ENCODE measurements at regions of chr10 and their contacts with region 1.

Region 1: GRCh38 chr10:29443745-29444523 is 155.1 kb downstream of the LYZL1 start:
- DNase-seq: no peak
- H3K4me3 ChIP-seq: no peak overlapping the region
- H3K27ac ChIP-seq: no peak overlapping the region
- H3K4me1 ChIP-seq: no peaks in the 10 kb centered on the region
- H3K27me3 ChIP-seq: no peaks in the 10 kb centered on the region
- CTCF ChIP-seq: no peak

Region 2: DNA sequence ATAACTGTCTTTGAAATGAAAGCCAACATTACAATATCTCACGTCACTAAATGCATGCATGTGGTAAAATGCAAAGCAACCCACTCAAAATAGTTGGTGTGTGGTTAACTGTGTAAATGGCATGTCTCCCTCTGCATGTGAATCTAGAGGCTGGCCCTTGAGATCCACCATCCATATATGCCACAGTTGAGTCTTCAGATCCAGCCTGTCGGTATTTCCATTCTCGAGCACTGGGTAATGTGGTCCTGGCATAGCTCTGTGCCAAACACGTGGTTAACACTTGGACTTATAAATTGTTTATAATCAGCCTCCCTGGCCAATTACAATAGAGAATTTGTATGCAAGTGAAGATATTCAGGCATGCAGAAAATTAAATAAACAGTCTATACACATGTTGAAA is 64.7 kb before region 1 on chr10:
- intact Hi-C with region 1: loop called (anchors 2 kb)
- DNase-seq: no peak
- H3K4me3 ChIP-seq: no peak overlapping the region
- H3K27ac ChIP-seq: no peak overlapping the region
- H3K4me1 ChIP-seq: no peaks in the 10 kb centered on the region
- H3K27me3 ChIP-seq: no peaks in the 10 kb centered on the region
- CTCF ChIP-seq: no peak

Region 3: DNA sequence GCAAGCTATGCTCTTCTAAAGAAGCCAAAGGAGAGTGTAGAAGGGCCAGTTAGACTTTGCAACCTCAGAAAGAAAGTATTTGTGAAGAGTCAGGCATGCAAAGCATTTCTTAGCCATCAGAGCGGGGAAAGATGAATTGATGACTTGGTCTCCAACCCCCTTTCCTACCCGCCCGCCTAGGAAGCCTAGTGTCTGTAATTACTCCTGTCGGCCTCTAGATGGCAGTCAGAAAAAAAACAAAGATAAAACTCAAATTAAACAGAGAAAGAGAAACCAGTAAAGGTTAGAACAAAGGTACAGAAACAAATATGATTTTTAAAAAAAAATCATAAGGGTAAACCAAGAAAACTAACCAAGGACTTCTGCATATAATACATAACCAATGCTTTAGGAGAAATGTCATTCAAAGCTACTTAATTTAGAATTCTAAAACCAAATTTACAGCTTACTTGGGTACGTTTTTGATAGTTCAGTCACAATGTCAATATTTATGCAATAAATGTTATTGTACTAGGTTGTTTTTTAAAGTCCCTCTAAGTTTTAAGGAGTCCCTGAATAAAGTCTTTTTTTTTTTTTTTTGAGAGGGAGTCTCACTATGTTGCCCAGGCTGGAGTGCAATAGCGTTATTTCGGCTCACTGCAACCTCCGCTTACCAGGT is 57.5 kb before region 1 on chr10:
- intact Hi-C with region 1: loop called (anchors 2 kb)
- DNase-seq: no peak
- H3K4me3 ChIP-seq: no peak overlapping the region
- H3K27ac ChIP-seq: no peak overlapping the region
- H3K4me1 ChIP-seq: no peaks in the 10 kb centered on the region
- H3K27me3 ChIP-seq: no peaks in the 10 kb centered on the region
- CTCF ChIP-seq: peak; percentile 62

Measured in colonic mucosa (tissue), 4 donors.